Esophagus squamous epithelium (tissue), 5 donors: ENCODE measurements at regions of chr11 and their contacts with region 1.

Region 1: GRCh38 chr11:2532704-2533586 is 88.1 kb downstream of the KCNQ1 start:
- DNase-seq: peak; percentile 49
- H3K4me3 ChIP-seq: peak overlapping the region in 3 of 4 donors; percentile 21 to 51 (median 25)
- H3K27ac ChIP-seq: peak overlapping the region in 3 of 4 donors; percentile 21 to 62 (median 52)
- H3K4me1 ChIP-seq: peaks cover 7 to 20% (median 10%) of the 10 kb centered on the region in 3 donors
- H3K27me3 ChIP-seq: no peaks in the 10 kb centered on the region
- CTCF ChIP-seq: peak; percentile 99
- POLR2A ChIP-seq: no peak

Region 2: GRCh38 chr11:2428322-2428795 is 104.6 kb before region 1 on chr11:
- intact Hi-C with region 1: loop called (anchors 2 kb)
- DNase-seq: no peak
- H3K4me3 ChIP-seq: no peak overlapping the region
- H3K27ac ChIP-seq: no peak overlapping the region
- H3K4me1 ChIP-seq: peaks cover 0 to 8% (median 0%) of the 10 kb centered on the region in 3 donors
- H3K27me3 ChIP-seq: peaks cover 0 to 19% (median 0%) of the 10 kb centered on the region in 4 donors
- CTCF ChIP-seq: peak; percentile 84 to 96 (median 95)
- POLR2A ChIP-seq: no peak

Region 3: DNA sequence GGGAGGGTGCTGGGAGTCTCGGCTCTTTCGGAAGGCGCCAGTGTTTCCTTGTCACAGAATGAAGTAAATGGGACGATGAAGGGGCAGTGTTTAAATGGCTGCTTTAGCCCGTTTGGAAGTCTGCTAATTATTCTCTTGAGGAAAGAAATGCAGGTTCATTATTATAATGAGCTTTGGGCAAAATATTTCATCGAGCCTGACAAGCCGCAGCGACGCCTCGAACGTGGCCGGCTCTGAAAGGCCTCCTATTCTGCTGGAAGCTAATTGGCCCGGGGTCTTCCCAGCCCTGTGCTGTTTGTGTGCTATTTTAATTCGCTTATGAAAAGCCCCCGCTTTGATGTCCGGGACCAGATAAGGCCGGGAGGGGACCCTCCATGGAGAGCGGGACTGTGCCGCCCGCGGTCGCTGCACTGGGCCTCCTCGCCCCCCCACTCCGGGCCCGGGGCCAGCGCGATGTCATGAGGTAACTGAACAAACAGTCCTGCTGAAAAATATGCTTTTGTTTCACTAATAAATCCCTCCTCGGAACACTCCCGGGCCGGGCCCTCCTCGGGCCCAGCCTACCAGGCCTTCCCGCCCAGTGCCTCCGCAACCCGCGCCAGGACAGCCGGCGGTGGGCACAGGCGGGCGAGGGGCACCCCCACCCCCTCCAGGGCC is 274.2 kb after region 1 on chr11:
- intact Hi-C with region 1: no loop called
- DNase-seq: no peak
- H3K4me3 ChIP-seq: peak overlapping the region in 2 of 4 donors; percentile 19 to 45
- H3K27ac ChIP-seq: peak overlapping the region; percentile 41 to 88 (median 80)
- H3K4me1 ChIP-seq: peaks cover 10 to 76% (median 45%) of the 10 kb centered on the region in 3 donors
- H3K27me3 ChIP-seq: peaks cover 0 to 8% (median 0%) of the 10 kb centered on the region in 4 donors
- CTCF ChIP-seq: no peak
- POLR2A ChIP-seq: no peak